Natural killer cell (primary cell): ENCODE measurements at regions of chr2 and their contacts with region 1.

Region 1: GRCh38 chr2:233354971-233355574 is 779 bp downstream of the DGKD start:
- DNase-seq: peak; percentile 20 to 41
- ATAC-seq: no peak
- H3K4me3 ChIP-seq: peak overlapping the region; percentile 85
- H3K4me3 Mint-ChIP-seq: peak overlapping the region; percentile 83
- H3K27ac ChIP-seq: peak overlapping the region; percentile 89
- H3K27ac Mint-ChIP-seq: peak overlapping the region; percentile 86 to 93
- H3K4me1 ChIP-seq: peaks cover 58% of the 10 kb centered on the region
- H3K4me1 Mint-ChIP-seq: peaks cover 66 to 76% of the 10 kb centered on the region in 2 donors
- H3K27me3 ChIP-seq: no peaks in the 10 kb centered on the region
- H3K27me3 Mint-ChIP-seq: no peaks in the 10 kb centered on the region
- CTCF ChIP-seq: no peak

Region 2: GRCh38 chr2:233251306-233252116 is 103.6 kb before region 1 on chr2 and contains the start of gene ATG16L1:
- intact Hi-C with region 1: loop called (anchors 5 kb)
- DNase-seq: peak; percentile 94 to 98
- ATAC-seq: peak; percentile 97 to 100 (median 98)
- H3K4me3 ChIP-seq: peak within 1 kb of the TSS; percentile 74
- H3K4me3 Mint-ChIP-seq: peak within 1 kb of the TSS; percentile 96
- H3K27ac ChIP-seq: peak within 1 kb of the TSS; percentile 73
- H3K27ac Mint-ChIP-seq: peak within 1 kb of the TSS; percentile 93 to 94
- H3K4me1 ChIP-seq: peaks cover 32% of the 10 kb centered on the region
- H3K4me1 Mint-ChIP-seq: peaks cover 45 to 56% of the 10 kb centered on the region in 2 donors
- H3K27me3 ChIP-seq: no peaks in the 10 kb centered on the region
- H3K27me3 Mint-ChIP-seq: no peaks in the 10 kb centered on the region
- CTCF ChIP-seq: peak; percentile 91
- total RNA-seq, gene ATG16L1: 106 to 142 (median 117) TPM

Region 3: DNA sequence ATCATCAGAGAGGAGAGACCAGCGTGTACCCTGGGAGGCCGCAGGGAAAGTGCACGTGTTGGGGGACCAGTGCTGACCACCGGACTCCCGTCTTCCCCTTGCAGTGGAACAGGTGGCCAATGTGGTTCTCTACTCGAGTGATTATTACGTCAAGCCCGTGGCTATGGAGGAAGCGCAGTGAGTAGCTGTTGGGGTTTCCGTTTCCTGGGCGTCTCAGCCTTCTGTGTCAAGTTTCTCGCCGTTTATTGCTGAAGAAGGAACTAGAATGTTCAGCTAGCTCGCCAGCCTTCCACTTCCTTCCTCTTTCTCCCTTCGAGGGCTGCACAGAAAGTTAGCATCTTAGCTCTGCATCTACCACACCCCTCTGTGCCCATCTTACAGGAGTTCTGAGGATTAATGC is 23.5 kb before region 1 on chr2:
- intact Hi-C with region 1: loop called (anchors 2 kb)
- DNase-seq: peak; percentile 69 to 94
- ATAC-seq: peak; percentile 94 to 95 (median 95)
- H3K4me3 ChIP-seq: no peak overlapping the region
- H3K4me3 Mint-ChIP-seq: peak overlapping the region; percentile 83
- H3K27ac ChIP-seq: peak overlapping the region; percentile 97
- H3K27ac Mint-ChIP-seq: peak overlapping the region; percentile 97
- H3K4me1 ChIP-seq: peaks cover 60% of the 10 kb centered on the region
- H3K4me1 Mint-ChIP-seq: peaks cover 46 to 61% of the 10 kb centered on the region in 2 donors
- H3K27me3 ChIP-seq: no peaks in the 10 kb centered on the region
- H3K27me3 Mint-ChIP-seq: no peaks in the 10 kb centered on the region
- CTCF ChIP-seq: no peak

Region 4: GRCh38 chr2:233387667-233388528 is 32.8 kb after region 1 on chr2:
- intact Hi-C with region 1: loop called (anchors 1 kb)
- DNase-seq: peak in 1 of 2 donors; percentile 48
- ATAC-seq: no peak
- H3K4me3 ChIP-seq: no peak overlapping the region
- H3K4me3 Mint-ChIP-seq: peak overlapping the region; percentile 87
- H3K27ac ChIP-seq: peak overlapping the region; percentile 64
- H3K27ac Mint-ChIP-seq: peak overlapping the region; percentile 91 to 93
- H3K4me1 ChIP-seq: peaks cover 66% of the 10 kb centered on the region
- H3K4me1 Mint-ChIP-seq: peaks cover 67 to 78% of the 10 kb centered on the region in 2 donors
- H3K27me3 ChIP-seq: no peaks in the 10 kb centered on the region
- H3K27me3 Mint-ChIP-seq: no peaks in the 10 kb centered on the region
- CTCF ChIP-seq: no peak

Region 5: GRCh38 chr2:233409286-233409991 is 54.4 kb after region 1 on chr2:
- intact Hi-C with region 1: loop called (anchors 2 kb)
- DNase-seq: peak in 1 of 2 donors; percentile 76
- ATAC-seq: peak; percentile 77 to 82 (median 82)
- H3K4me3 ChIP-seq: no peak overlapping the region
- H3K4me3 Mint-ChIP-seq: peak overlapping the region; percentile 69
- H3K27ac ChIP-seq: peak overlapping the region; percentile 39
- H3K27ac Mint-ChIP-seq: peak overlapping the region; percentile 78 to 84
- H3K4me1 ChIP-seq: peaks cover 33% of the 10 kb centered on the region
- H3K4me1 Mint-ChIP-seq: peaks cover 51 to 81% of the 10 kb centered on the region in 2 donors
- H3K27me3 ChIP-seq: no peaks in the 10 kb centered on the region
- H3K27me3 Mint-ChIP-seq: no peaks in the 10 kb centered on the region
- CTCF ChIP-seq: no peak

Region 6: DNA sequence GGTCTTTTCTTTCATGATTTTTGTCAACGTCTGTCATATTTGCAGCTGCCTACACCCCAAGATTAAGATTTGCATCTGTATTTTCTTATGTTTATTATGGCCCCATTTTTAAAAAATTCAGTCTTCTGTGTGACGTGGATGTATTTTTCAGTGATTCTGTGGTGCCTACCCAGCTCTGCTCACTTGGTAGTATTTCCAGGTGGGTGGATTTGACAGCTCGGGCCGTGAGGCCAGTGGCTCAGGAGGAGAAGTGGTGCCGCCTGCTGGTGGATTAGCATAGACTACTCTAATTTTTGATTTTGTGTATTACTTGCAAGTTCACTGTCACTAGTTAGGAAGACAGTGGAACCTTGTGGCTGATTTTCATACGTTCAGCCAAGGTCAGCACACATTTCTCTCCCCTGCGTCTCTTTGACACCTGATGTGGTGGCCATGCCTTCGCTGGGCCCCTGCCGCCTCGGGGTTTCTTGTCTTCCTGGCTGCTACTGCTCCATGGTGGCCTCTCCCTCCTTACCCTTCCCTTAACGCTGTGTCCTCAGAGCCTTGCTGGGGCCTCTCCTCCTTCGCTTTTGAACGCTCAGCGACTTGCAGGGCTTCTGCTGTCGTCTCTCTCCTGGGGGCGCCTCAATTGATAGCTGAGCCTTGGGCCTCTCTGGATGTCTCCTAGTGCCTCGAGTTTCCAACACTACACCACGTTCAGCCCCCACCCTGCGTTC is 88.6 kb after region 1 on chr2:
- intact Hi-C with region 1: loop called (anchors 2 kb)
- DNase-seq: peak; percentile 73 to 92
- ATAC-seq: peak; percentile 84 to 99 (median 93)
- H3K4me3 ChIP-seq: no peak overlapping the region
- H3K4me3 Mint-ChIP-seq: no peak overlapping the region
- H3K27ac ChIP-seq: no peak overlapping the region
- H3K27ac Mint-ChIP-seq: peak overlapping the region; percentile 80 to 83
- H3K4me1 ChIP-seq: peaks cover 6% of the 10 kb centered on the region
- H3K4me1 Mint-ChIP-seq: peaks cover 38 to 46% of the 10 kb centered on the region in 2 donors
- H3K27me3 ChIP-seq: no peaks in the 10 kb centered on the region
- H3K27me3 Mint-ChIP-seq: no peaks in the 10 kb centered on the region
- CTCF ChIP-seq: peak; percentile 90